ENCODE measurements at regions of chr9 and their contacts with region 1.

Region 1: GRCh38 chr9:4382722-4383317 is 83.0 kb upstream of the GLIS3 start:
- DNase-seq: peak; percentile 23
- ATAC-seq: peak; percentile 64; the same call in 1 of the 2 replicates
- H3K4me3 ChIP-seq: no peak overlapping the region
- H3K27ac ChIP-seq: no peak overlapping the region
- H3K4me1 ChIP-seq: no peaks in the 10 kb centered on the region
- H3K27me3 ChIP-seq: peaks cover 19% of the 10 kb centered on the region
- CTCF ChIP-seq: peak; percentile 67
- POLR2A ChIP-seq: no peak
- RAD21 ChIP-seq: peak; percentile 70

Region 2: DNA sequence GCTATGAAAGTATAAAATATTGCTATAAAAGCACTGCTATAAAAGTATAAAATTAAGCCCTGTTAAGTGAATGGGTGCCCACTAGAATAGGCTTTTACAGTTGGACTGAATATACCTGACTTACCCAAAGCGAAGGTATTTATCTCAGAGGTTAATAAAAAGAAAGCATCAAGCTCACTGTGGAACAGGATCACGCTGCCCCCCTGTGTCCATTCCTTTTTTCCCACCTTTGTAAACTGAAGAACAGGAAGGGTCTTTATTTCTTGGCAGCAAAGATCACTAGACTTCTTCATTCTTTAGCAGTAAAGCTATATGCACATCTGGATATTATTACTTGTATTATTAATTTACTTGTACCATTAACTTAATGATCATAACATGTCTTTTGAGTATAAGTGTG is 257.2 kb after region 1 on chr9:
- CTCF ChIA-PET with region 1: interaction called, 3 read pairs
- POLR2A ChIA-PET with region 1: no interaction called
- dilution Hi-C with region 1: no loop called
- in situ Hi-C with region 1: no loop called
- intact Hi-C with region 1: loop called (anchors 1 kb)
- DNase-seq: no peak
- ATAC-seq: no peak
- H3K4me3 ChIP-seq: no peak overlapping the region
- H3K27ac ChIP-seq: no peak overlapping the region
- H3K4me1 ChIP-seq: no peaks in the 10 kb centered on the region
- H3K27me3 ChIP-seq: no peaks in the 10 kb centered on the region; the same call in 1 of the 2 replicates
- CTCF ChIP-seq: peak; percentile 49
- POLR2A ChIP-seq: no peak
- RAD21 ChIP-seq: peak; percentile 55

Region 3: GRCh38 chr9:4740638-4741364 is 358.0 kb after region 1 on chr9 and contains the start of gene AK3:
- CTCF ChIA-PET with region 1: no interaction called
- POLR2A ChIA-PET with region 1: no interaction called
- dilution Hi-C with region 1: no loop called
- in situ Hi-C with region 1: no loop called
- intact Hi-C with region 1: loop called (anchors 5 kb)
- DNase-seq: peak; percentile 82
- ATAC-seq: peak; percentile 95
- H3K4me3 ChIP-seq: peak within 1 kb of the TSS; percentile 94
- H3K27ac ChIP-seq: peak within 1 kb of the TSS; percentile 96
- H3K4me1 ChIP-seq: peaks cover 7% of the 10 kb centered on the region; the same call in 1 of the 2 replicates
- H3K27me3 ChIP-seq: no peaks in the 10 kb centered on the region
- CTCF ChIP-seq: peak; percentile 46
- POLR2A ChIP-seq: peak; percentile 78
- RAD21 ChIP-seq: peak; percentile 46
- total RNA-seq, gene AK3: 24.7 and 33.3 TPM in 2 replicates

Region 4: GRCh38 chr9:4832786-4833579 is 450.2 kb after region 1 on chr9:
- CTCF ChIA-PET with region 1: no interaction called
- POLR2A ChIA-PET with region 1: no interaction called
- dilution Hi-C with region 1: no loop called
- in situ Hi-C with region 1: no loop called
- intact Hi-C with region 1: loop called (anchors 10 kb)
- DNase-seq: peak; percentile 100
- ATAC-seq: peak; percentile 65
- H3K4me3 ChIP-seq: no peak overlapping the region
- H3K27ac ChIP-seq: peak overlapping the region; percentile 85
- H3K4me1 ChIP-seq: peaks cover 36% of the 10 kb centered on the region
- H3K27me3 ChIP-seq: no peaks in the 10 kb centered on the region
- CTCF ChIP-seq: no peak
- POLR2A ChIP-seq: peak; percentile 20; the same call in 1 of the 2 replicates
- RAD21 ChIP-seq: no peak

Region 5: DNA sequence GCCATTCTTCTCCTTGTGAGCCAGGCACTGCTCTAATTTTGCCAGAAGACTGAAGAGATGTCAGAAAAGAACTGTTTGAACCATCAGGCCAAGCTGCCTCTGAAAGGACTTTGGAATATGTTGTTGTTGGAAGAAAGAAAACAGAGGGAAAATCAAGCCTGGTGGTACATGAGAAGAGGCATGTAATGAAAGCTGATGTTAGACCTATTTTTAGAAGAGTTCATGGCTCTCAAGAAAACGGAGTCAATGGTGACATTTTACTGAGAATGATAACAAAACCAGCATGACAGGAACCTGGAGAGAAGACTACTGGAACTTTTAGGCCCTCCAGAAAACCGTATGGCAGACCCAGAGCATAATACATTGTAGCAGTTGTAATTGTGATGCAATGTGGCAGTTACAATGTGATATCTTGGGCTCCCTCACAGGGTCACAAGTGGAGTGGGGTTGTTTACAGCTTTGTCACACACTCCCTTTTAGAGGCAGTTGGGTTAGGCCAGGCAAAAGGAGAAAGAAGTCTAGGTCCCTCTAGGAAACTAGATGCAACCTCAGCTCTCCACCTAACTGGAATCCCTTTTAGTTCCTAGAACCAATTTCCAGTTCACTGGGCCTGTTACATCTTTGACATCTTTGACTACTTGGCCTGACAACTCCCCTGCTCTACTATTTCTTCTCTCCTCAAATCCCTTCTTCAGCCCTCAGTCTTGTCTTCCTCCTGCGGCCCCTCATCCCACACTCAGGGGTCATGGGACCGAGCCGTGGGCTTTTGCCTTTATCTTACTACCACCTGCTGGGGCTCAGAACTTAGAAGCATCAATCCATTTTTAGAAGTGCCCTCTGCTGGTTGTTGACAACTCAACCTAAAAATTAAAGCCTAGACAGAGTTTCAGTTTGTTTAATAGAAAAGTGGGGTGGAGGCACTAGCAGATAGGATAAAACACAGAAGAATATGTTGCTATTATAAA is 541.0 kb after region 1 on chr9:
- CTCF ChIA-PET with region 1: no interaction called
- POLR2A ChIA-PET with region 1: no interaction called
- dilution Hi-C with region 1: no loop called
- in situ Hi-C with region 1: no loop called
- intact Hi-C with region 1: loop called (anchors 10 kb)
- DNase-seq: peak; percentile 44
- ATAC-seq: peak; percentile 56
- H3K4me3 ChIP-seq: no peak overlapping the region
- H3K27ac ChIP-seq: no peak overlapping the region
- H3K4me1 ChIP-seq: no peaks in the 10 kb centered on the region
- H3K27me3 ChIP-seq: peaks cover 2% of the 10 kb centered on the region; the same call in 1 of the 2 replicates
- CTCF ChIP-seq: peak; percentile 61
- POLR2A ChIP-seq: no peak
- RAD21 ChIP-seq: peak; percentile 56